ENCODE measurements at regions of chr2 and their contacts with region 1.

Region 1: GRCh38 chr2:74587664-74588277 is 33.3 kb downstream of the DOK1 start:
- DNase-seq: peak; percentile 36 to 65
- ATAC-seq: peak; percentile 81 to 93 (median 90)
- H3K4me3 ChIP-seq: no peak overlapping the region
- H3K27ac ChIP-seq: no peak overlapping the region
- H3K4me1 ChIP-seq: peaks cover 0 to 37% (median 0%) of the 10 kb centered on the region in 9 donors
- H3K27me3 ChIP-seq: peaks cover 0 to 48% (median 35%) of the 10 kb centered on the region in 7 donors
- CTCF ChIP-seq: peak; percentile 64 to 83 (median 77)

Region 2: GRCh38 chr2:74482801-74483674 is 104.7 kb before region 1 on chr2 and contains the starts of genes CCDC142 and TTC31:
- intact Hi-C with region 1: loop called (anchors 1 to 5 kb)
- DNase-seq: peak; percentile 94 to 98
- ATAC-seq: peak; percentile 98 to 99 (median 99)
- H3K4me3 ChIP-seq: peak within 1 kb of the TSS; percentile 74 to 97 (median 88)
- H3K27ac ChIP-seq: peak within 1 kb of the TSS; percentile 78 to 94 (median 90)
- H3K4me1 ChIP-seq: peaks cover 10 to 40% (median 29%) of the 10 kb centered on the region in 9 donors
- H3K27me3 ChIP-seq: no peaks in the 10 kb centered on the region
- CTCF ChIP-seq: peak; percentile 81 to 98 (median 88)
- total RNA-seq, gene CCDC142: 2.3 to 11.7 (median 5.5) TPM
- total RNA-seq, gene TTC31: 7.2 to 12.1 (median 9.4) TPM

Region 3: GRCh38 chr2:74488644-74489481 is 98.9 kb before region 1 on chr2:
- intact Hi-C with region 1: loop called in 5 of 10 experiments (anchors 5 kb)
- DNase-seq: no peak
- ATAC-seq: no peak
- H3K4me3 ChIP-seq: no peak overlapping the region
- H3K27ac ChIP-seq: no peak overlapping the region
- H3K4me1 ChIP-seq: peaks cover 0 to 7% (median 6%) of the 10 kb centered on the region in 9 donors
- H3K27me3 ChIP-seq: no peaks in the 10 kb centered on the region
- CTCF ChIP-seq: no peak

Region 4: GRCh38 chr2:74507145-74507925 is 80.4 kb before region 1 on chr2 and contains the start of gene PCGF1:
- intact Hi-C with region 1: loop called in 3 of 10 experiments (anchors 5 kb)
- DNase-seq: peak; percentile 99
- ATAC-seq: peak; percentile 95 to 97 (median 96)
- H3K4me3 ChIP-seq: peak within 1 kb of the TSS; percentile 64 to 83 (median 70)
- H3K27ac ChIP-seq: peak within 1 kb of the TSS; percentile 95 to 99 (median 96)
- H3K4me1 ChIP-seq: peaks cover 8 to 55% (median 43%) of the 10 kb centered on the region in 9 donors
- H3K27me3 ChIP-seq: peaks cover 0 to 56% (median 43%) of the 10 kb centered on the region in 7 donors
- CTCF ChIP-seq: peak in 8 of 9 donors; percentile 40 to 67 (median 49)
- total RNA-seq, gene PCGF1: 10.7 to 27.4 (median 14.9) TPM

Region 5: DNA sequence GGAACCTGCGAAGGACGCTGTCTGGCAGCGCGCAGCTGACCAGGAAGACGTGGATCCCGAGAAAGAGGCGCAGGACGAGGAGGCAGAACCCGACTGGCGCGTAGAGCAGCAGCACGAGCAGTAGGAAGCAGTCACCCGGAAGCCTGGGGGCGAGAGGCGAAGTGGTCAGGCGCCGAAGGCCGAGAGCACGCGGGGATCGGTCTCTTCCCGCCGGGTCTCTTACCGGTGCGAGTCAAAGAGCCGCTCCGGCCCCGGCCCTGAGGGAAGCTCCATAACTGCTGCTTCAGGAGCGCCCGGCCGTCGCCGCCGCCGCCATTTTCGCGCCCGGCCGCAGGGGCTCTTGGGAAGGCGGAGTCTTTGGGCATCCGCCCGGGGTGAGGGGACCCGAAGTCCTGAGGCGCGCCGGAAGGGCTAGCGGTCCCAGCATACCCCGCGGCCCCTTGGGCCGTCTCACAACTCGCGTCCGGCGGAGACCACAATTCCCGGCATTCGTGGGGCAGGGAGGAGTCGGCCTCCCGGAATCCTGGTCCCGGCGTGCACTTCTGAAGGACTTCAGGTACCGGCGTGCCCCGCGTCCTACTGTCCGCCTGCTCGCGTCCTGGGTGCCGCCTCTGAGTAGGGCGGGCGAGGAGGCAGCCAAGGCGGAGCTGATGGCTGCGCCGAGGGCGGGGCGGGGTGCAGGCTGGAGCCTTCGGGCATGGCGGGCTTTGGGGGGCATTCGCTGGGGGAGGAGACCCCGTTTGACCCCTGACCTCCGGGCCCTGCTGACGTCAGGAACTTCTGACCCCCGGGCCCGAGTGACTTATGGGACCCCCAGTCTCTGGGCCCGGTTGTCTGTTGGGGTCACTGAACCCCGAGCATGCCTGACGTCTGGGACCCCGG is 58.2 kb before region 1 on chr2 and contains the starts of genes AUP1 and HTRA2:
- intact Hi-C with region 1: loop called in 1 of 10 experiments (anchors 5 kb)
- DNase-seq: peak; percentile 98
- ATAC-seq: peak; percentile 94 to 98 (median 96)
- H3K4me3 ChIP-seq: peak within 1 kb of the TSS; percentile 63 to 97 (median 88)
- H3K27ac ChIP-seq: peak within 1 kb of the TSS; percentile 72 to 95 (median 91)
- H3K4me1 ChIP-seq: peaks cover 12 to 35% (median 31%) of the 10 kb centered on the region in 9 donors
- H3K27me3 ChIP-seq: no peaks in the 10 kb centered on the region
- CTCF ChIP-seq: no peak
- total RNA-seq, gene AUP1: 31.4 to 74.2 (median 38.2) TPM
- total RNA-seq, gene HTRA2: 21.2 to 29.6 (median 24.9) TPM

Region 6: GRCh38 chr2:74553892-74554645 is 33.7 kb before region 1 on chr2 and contains the start of gene LOXL3:
- intact Hi-C with region 1: loop called in 1 of 10 experiments (anchors 5 kb)
- DNase-seq: peak; percentile 81 to 87
- ATAC-seq: peak; percentile 74 to 83 (median 80)
- H3K4me3 ChIP-seq: peak within 1 kb of the TSS; percentile 40 to 83 (median 76)
- H3K27ac ChIP-seq: peak within 1 kb of the TSS; percentile 80 to 93 (median 90)
- H3K4me1 ChIP-seq: peaks cover 12 to 45% (median 22%) of the 10 kb centered on the region in 9 donors
- H3K27me3 ChIP-seq: peaks cover 0 to 10% (median 0%) of the 10 kb centered on the region in 7 donors
- CTCF ChIP-seq: no peak
- total RNA-seq, gene LOXL3: 1.2 to 9.2 (median 2.4) TPM

Measured in heart right ventricle (tissue), 16 donors.